PC-9 (cell line): ENCODE measurements at regions of chr10 and their contacts with region 1.

Region 1: GRCh38 chr10:21533467-21534279 is at the start of gene MLLT10:
- DNase-seq: peak; percentile 67 to 95
- H3K4me3 ChIP-seq: peak within 1 kb of the TSS; percentile 71
- H3K27ac ChIP-seq: peak within 1 kb of the TSS; percentile 72
- H3K4me1 ChIP-seq: peaks cover 16% of the 10 kb centered on the region
- H3K27me3 ChIP-seq: no peaks in the 10 kb centered on the region
- CTCF ChIP-seq: no peak
- total RNA-seq, gene MLLT10: 39.6 and 48.4 TPM in 2 replicates

Region 2: DNA sequence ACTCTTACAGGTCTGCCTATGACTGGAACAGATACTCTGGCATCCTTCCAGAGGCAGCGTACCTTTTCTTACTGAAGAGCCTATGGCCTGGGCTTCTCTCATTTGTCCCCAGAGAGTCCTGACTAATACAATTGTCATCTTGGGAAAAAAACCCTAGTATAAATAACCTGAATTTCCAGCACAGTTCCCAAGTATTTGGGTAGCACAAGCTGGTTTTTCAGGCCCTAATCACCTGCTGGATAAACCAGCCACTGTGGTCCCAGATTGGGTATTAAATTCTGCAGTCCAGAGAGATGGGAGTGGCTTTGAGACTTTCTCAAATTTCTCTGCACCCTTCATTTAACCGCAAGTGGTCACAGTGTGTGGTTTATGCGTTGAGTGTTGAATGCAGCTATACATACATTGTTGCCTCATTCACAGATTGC is 449.8 kb before region 1 on chr10:
- CTCF ChIA-PET with region 1: no interaction called
- POLR2A ChIA-PET with region 1: no interaction called
- intact Hi-C with region 1: loop called (anchors 5 kb)
- DNase-seq: peak; percentile 75 to 97
- H3K4me3 ChIP-seq: no peak overlapping the region
- H3K27ac ChIP-seq: peak overlapping the region; percentile 80
- H3K4me1 ChIP-seq: peaks cover 21% of the 10 kb centered on the region
- H3K27me3 ChIP-seq: no peaks in the 10 kb centered on the region
- CTCF ChIP-seq: no peak